Lower leg skin (tissue), 4 donors: ENCODE measurements at regions of chr9 and their contacts with region 1.

Region 1: GRCh38 chr9:36166101-36166927 is 2.9 kb upstream of the CCIN start:
- DNase-seq: peak; percentile 72 to 97
- H3K4me3 ChIP-seq: peak overlapping the region; percentile 33
- CTCF ChIP-seq: peak in 1 of 3 donors; percentile 53
- POLR2A ChIP-seq: no peak

Region 2: DNA sequence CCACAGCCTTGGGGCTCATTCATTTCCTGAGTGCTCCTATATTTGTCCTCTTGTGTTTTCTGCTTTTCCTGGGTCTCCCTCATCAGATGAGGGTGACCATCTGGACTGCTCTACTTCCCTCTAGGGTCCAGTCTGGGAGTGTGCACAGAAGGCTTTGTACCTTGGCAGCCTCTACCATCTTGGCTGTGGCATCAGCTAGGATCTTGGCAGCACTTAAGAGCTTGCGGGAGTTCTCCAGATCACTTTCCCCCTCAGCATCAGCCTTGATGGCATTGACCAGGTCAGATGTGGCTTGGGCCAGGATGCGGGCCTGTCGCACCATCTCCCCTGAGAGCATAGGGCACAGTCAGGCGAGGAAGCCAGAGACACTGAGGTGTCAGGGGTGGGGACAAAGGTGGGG is 450.1 kb before region 1 on chr9:
- intact Hi-C with region 1: no loop called
- DNase-seq: no peak
- H3K4me3 ChIP-seq: no peak overlapping the region
- CTCF ChIP-seq: no peak
- POLR2A ChIP-seq: no peak

Region 3: DNA sequence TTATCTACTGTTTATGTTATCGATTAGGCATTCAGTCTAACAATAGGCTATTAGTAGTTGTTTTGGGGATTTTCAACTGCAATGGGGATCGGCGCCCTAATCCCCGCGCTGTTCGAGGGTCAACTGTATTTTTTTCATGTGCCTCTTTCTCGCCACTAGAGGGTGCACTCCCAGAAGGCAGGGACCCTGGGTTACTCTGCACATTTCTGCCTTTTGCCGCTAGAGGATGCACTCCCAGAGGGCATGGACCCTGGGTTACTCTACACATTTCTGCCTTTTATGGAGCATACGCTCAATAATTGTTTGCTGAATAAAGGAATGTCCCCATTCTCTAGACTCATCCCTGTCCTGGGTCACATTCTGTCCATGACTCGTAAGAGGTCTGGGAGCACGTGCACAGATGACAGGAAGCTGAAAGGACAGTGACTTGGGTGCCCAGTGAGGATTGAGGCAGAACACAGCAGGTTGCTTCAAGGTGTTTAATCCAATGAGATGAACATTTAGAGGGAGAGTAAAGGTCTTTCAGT is 157.5 kb before region 1 on chr9:
- intact Hi-C with region 1: loop called (anchors 5 kb)
- DNase-seq: peak; percentile 51 to 90
- H3K4me3 ChIP-seq: no peak overlapping the region
- CTCF ChIP-seq: peak in 2 of 3 donors; percentile 34 to 93
- POLR2A ChIP-seq: no peak

Region 4: DNA sequence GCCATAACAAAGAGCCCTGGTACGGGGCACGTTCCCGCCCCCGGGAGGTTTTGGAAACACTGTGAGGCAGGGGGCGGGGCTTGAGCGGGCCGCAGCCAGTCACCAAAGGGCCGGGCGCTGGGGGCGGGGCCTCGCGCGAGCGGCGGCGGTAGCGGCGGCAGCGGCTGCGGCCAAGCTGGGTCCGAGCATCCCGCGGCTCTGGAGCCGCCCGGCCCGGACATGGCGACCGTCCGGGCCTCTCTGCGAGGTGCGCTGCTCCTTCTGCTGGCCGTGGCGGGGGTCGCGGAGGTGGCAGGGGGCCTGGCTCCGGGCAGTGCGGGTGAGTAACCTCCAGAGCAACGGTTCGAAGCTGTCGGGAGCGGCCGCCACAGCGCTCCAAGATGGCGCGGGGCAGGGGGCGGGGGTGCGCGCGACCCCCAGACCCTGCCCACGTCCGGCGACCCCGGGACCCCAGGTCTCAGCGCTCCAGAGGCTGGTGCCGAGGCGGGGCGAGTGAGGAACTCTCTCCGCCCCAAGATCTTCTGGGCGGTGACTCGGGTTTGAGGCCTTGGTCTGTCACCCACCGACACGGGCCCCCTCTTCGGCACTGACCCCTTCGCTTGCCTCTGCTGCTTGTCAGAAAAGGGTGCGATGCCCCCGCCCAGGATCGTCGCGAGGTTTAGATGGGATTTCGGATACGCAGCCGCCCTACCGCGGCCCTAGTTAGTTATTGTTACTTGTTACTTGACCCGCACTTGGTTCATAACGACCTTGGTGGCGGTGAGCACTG is 129.3 kb before region 1 on chr9 and contains the start of gene RECK:
- intact Hi-C with region 1: no loop called
- DNase-seq: peak; percentile 84 to 98
- H3K4me3 ChIP-seq: peak within 1 kb of the TSS; percentile 83
- CTCF ChIP-seq: no peak
- POLR2A ChIP-seq: peak in 1 of 2 donors; percentile 81
- total RNA-seq, gene RECK: 2.1 to 9.7 (median 3.7) TPM

Region 5: DNA sequence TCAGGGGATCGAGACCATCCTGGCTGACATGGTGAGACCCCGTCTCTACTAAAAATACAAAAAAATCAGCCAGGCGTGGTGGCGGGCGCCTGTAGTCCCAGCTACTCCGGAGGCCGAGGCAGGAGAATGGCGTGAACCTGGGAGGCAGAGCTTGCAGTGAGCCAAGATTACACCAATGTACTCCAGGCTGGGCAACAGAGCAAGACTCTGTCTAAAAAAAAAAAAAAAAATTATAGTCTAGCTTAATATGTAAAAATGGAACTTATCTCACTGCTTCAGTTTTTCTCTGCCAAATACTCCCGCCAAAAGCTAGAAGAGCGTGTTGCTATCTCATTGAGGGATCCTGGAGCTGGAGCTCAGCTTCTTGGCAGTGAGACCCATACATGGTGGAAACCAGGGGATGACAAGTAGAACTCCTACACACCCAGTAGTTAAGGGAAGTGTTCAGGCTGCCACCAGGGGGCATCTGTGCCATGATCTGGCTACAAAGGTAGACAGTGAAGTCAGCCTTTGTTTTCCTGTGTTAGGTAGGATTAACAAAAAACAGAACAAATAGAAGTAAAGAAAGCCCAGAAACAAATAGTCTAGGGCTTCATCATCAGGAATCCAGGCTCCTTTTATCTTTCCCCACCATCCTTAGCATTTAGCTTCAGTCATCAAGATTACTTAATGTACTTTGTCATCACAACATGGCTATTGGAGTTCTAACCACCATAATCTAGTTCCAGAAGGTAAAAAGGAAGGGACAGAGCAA is 63.4 kb before region 1 on chr9:
- intact Hi-C with region 1: loop called (anchors 10 kb)
- DNase-seq: peak; percentile 62 to 95
- H3K4me3 ChIP-seq: no peak overlapping the region
- CTCF ChIP-seq: peak in 1 of 3 donors; percentile 55
- POLR2A ChIP-seq: no peak

Region 6: GRCh38 chr9:36204906-36205547 is 38.7 kb after region 1 on chr9:
- intact Hi-C with region 1: no loop called
- DNase-seq: no peak
- H3K4me3 ChIP-seq: no peak overlapping the region
- CTCF ChIP-seq: no peak
- POLR2A ChIP-seq: no peak